Mammary epithelial cell (primary cell): ENCODE measurements at regions of chr2 and their contacts with region 1.

Region 1: DNA sequence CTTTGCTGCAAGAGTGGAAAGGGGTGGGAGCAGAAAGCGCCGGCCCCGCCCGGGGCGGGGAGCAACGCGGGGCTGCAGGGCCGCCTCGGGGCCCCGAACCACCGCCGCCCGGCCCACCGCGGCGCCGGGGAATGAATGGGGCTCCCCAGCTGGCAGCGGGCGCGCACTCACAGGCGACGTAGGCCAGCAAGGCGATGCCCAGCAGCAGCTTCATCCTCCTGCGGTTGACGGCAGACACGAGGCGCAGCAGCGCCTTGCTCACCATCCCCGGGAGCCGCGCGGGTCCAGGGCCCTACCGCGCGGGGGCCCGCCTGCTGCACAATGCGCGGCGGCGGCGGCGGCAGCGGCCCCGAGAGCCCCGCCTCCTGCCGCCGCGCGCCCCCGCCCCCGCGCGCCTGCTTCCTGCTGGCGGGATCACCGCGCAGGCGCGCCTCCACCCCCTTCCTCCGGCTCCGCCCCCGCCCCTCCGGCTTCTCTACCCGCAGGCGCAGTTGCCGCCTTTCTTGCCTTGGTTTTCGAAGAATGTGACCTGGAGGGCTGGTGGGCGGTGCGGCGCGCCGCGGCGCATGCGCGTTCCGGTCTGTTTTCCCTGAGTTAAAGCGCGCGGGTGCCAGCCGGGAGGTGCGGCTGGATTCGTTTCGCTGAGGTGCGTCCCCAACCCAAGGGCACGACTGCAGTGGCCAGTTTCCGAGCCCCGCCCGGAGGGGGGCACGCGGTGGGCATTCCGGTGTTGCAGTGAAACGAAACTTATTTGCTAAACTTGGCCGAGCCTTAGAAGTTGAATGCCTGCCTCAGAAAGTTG is at the start of gene UXS1:
- DNase-seq: peak; percentile 95
- H3K4me3 ChIP-seq: peak within 1 kb of the TSS; percentile 82 to 96 (median 86)
- H3K27ac ChIP-seq: peak within 1 kb of the TSS; percentile 84
- H3K4me1 ChIP-seq: peaks cover 19% of the 10 kb centered on the region
- H3K27me3 ChIP-seq: no peaks in the 10 kb centered on the region
- CTCF ChIP-seq: no peak
- total RNA-seq, gene UXS1: 43.8 to 65.3 TPM

Region 2: GRCh38 chr2:105977212-105977611 is 217.0 kb before region 1 on chr2:
- CTCF ChIA-PET with region 1: no interaction called
- dilution Hi-C with region 1: no loop called
- in situ Hi-C with region 1: no loop called
- intact Hi-C with region 1: loop called (anchors 5 kb)
- DNase-seq: peak; percentile 90
- H3K4me3 ChIP-seq: no peak overlapping the region
- H3K27ac ChIP-seq: peak overlapping the region; percentile 33
- H3K4me1 ChIP-seq: peaks cover 8% of the 10 kb centered on the region
- H3K27me3 ChIP-seq: no peaks in the 10 kb centered on the region
- CTCF ChIP-seq: no peak

Region 3: DNA sequence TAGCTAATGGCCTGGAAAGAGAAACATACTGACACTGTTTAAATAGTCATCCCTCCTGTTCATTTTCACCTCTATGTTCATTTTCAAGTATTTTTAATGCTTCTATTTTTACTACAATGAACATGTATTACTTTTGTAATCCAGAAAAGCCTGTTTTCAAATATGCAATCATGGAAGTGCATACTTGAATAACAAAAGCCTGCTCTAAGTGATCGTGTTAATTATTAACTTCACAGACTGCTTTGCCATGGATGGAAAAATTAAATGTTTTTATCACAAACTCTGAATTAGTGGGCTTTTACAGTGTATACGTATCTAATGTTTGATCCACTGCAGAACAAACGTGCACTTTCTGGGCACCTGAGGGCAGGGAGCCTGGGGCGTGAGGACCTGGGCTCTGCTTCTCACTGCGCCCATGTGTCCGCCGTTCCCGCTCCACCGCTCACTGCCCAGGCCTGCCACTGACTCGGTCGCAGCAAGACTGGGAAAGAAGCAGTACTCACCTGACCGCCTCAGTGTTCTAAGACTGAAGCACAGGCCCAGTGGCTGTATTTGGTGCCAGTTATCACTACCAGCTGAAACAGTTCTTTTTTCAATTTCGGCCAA is 80.7 kb before region 1 on chr2:
- CTCF ChIA-PET with region 1: no interaction called
- dilution Hi-C with region 1: loop called (anchors 5 kb)
- in situ Hi-C with region 1: no loop called
- intact Hi-C with region 1: loop called (anchors 5 kb)
- DNase-seq: no peak
- H3K4me3 ChIP-seq: no peak overlapping the region
- H3K27ac ChIP-seq: no peak overlapping the region
- H3K4me1 ChIP-seq: peaks cover 13% of the 10 kb centered on the region
- H3K27me3 ChIP-seq: no peaks in the 10 kb centered on the region
- CTCF ChIP-seq: no peak

Region 4: DNA sequence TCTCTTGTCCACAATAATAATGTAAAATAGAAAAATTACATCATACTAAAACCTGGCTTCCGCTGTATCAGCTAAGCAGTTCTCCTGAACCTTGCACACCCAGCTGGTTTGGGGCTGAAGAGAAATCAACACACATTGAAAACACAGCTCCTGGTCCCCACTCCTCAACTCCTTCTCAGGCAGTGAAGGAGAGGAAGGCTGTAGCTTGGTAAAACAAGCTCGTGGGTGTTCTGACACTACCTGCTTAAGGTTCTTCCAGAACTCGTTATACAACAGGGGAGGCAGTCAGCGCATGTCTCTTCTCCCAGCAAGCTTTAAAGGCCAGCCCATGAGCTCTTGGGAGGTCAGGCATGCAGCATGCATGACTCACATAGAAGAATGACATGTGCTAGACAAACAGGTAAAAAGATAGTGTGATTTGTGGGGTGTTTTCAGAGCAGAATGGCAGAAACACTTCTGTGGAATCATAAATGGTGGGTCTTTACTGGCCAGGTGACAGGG is 69.2 kb before region 1 on chr2:
- CTCF ChIA-PET with region 1: no interaction called
- dilution Hi-C with region 1: no loop called
- in situ Hi-C with region 1: no loop called
- intact Hi-C with region 1: loop called (anchors 5 kb)
- DNase-seq: peak; percentile 50
- H3K4me3 ChIP-seq: no peak overlapping the region
- H3K27ac ChIP-seq: no peak overlapping the region
- H3K4me1 ChIP-seq: peaks cover 7% of the 10 kb centered on the region
- H3K27me3 ChIP-seq: no peaks in the 10 kb centered on the region
- CTCF ChIP-seq: no peak

Region 5: DNA sequence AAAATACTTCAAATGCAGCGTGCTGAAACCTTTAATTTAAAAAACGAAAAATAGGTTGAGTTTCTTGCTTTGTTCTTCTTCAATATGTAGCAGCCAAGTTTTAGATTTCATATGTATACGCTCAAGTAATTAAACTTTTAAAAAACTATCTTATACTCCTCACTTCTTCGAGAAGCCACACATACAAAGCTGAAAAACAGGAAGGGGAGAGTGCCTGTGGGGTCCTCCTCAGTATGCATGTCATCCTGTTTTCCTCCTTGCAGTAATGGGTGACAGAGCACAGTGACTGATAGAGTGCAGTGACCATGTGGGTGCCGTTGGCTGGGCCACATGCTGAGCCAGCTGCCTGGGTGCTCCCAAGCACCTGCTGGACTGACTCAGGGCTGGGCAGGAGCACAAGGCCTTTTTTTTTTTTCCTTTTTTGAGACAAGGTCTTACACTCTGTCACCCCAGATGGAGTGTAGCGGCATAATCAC is 33.4 kb before region 1 on chr2:
- CTCF ChIA-PET with region 1: no interaction called
- dilution Hi-C with region 1: no loop called
- in situ Hi-C with region 1: no loop called
- intact Hi-C with region 1: loop called (anchors 5 kb)
- DNase-seq: no peak
- H3K4me3 ChIP-seq: no peak overlapping the region
- H3K27ac ChIP-seq: no peak overlapping the region
- H3K4me1 ChIP-seq: peaks cover 11% of the 10 kb centered on the region
- H3K27me3 ChIP-seq: no peaks in the 10 kb centered on the region
- CTCF ChIP-seq: no peak